ENCODE measurements at regions of chr19 and their contacts with region 1.

Region 1: DNA sequence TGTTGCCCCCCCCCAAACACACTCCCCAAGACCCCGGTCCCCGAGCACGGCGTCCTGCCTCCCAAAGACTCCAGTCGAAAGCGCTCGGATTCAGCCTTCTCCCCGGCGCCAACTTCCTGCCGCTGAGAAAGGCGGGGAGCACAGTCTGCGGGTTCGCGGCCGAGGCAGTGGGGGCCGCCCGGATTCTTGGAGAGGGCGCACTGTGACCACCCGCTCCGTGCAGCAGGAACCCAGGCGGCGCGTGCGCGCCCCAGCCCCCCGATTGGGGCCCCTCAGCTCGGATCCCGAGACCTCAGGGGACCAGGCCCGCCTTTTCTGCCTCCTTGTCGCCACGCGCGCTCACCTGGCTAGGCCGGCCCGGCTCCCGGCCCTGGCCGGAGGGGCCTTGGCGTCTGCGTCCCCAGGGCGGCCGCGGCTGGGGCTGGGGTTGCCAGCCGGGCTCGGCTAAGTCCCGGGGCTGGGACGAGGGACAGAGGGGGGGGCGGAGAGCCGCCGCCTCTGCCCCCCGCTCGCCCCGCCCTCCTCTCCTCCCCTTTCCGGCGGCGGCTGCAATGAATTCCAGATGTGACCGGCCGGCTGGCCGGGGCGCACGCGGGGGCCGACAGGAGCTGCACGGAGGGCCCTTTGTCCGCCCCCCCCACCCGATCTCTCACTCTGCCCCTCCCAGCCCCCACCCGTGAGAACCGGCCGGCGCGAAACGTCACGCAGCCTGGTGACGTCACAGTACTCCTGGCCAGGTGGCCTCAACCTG is at the start of gene S1PR2:
- DNase-seq: peak; percentile 93
- total RNA-seq, gene S1PR2: 16.3 to 17.7 TPM

Region 2: GRCh38 chr19:9914315-9915207 is 316.5 kb before region 1 on chr19:
- intact Hi-C with region 1: loop called in 1 of 2 experiments (anchors 2 kb)
- DNase-seq: peak; percentile 90

Region 3: GRCh38 chr19:10194500-10195289 is 36.3 kb before region 1 on chr19 and contains the start of gene DNMT1:
- intact Hi-C with region 1: loop called in 1 of 2 experiments (anchors 5 kb)
- DNase-seq: peak; percentile 99
- total RNA-seq, gene DNMT1: 43.2 to 59.2 TPM